CD8-positive, alpha-beta T cell (primary cell): ENCODE measurements at regions of chr20 and their contacts with region 1.

Region 1: GRCh38 chr20:45987108-45987780 is 15.2 kb upstream of the ZNF335 start:
- DNase-seq: peak; percentile 55 to 84 (median 81)
- ATAC-seq: peak; percentile 99
- H3K4me3 ChIP-seq: no peak overlapping the region
- H3K4me3 Mint-ChIP-seq: no peak overlapping the region
- H3K27ac ChIP-seq: no peak overlapping the region
- H3K27ac Mint-ChIP-seq: no peak overlapping the region
- H3K4me1 ChIP-seq: peaks cover 6% of the 10 kb centered on the region
- H3K4me1 Mint-ChIP-seq: no peaks in the 10 kb centered on the region
- H3K27me3 ChIP-seq: no peaks in the 10 kb centered on the region
- H3K27me3 Mint-ChIP-seq: peaks cover 15% of the 10 kb centered on the region
- CTCF ChIP-seq: peak; percentile 94

Region 2: DNA sequence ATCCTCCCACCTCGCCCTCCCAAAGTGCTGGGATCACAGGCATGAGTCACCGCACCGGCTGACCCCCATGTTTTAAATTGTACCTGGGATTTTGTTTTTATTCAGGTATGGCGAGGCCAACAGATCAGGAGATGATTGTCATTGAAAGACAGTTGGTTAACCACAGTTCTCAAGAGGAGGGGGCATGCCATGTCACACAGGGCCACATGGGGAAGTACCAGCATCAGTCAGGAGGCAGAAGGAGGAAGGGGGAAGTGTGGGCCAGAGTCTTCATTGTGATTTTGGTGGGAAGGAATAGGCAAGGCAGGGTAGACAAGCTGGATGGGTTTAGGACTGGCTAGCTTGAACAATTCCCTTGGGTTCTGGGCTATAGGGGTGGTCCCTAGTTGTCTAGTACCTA is 11.5 kb after region 1 on chr20:
- CTCF ChIA-PET with region 1: interaction called, 20 read pairs
- POLR2A ChIA-PET with region 1: interaction called, 4 read pairs
- intact Hi-C with region 1: no loop called
- DNase-seq: peak in 3 of 9 experiments; percentile 22 to 62 (median 34)
- ATAC-seq: peak; percentile 77
- H3K4me3 ChIP-seq: no peak overlapping the region
- H3K4me3 Mint-ChIP-seq: no peak overlapping the region
- H3K27ac ChIP-seq: no peak overlapping the region
- H3K27ac Mint-ChIP-seq: peak overlapping the region; percentile 24
- H3K4me1 ChIP-seq: peaks cover 55% of the 10 kb centered on the region
- H3K4me1 Mint-ChIP-seq: peaks cover 56% of the 10 kb centered on the region
- H3K27me3 ChIP-seq: no peaks in the 10 kb centered on the region
- H3K27me3 Mint-ChIP-seq: peaks cover 8% of the 10 kb centered on the region
- CTCF ChIP-seq: no peak

Region 3: GRCh38 chr20:46004889-46005473 is 17.7 kb after region 1 on chr20:
- CTCF ChIA-PET with region 1: interaction called, 123 read pairs
- POLR2A ChIA-PET with region 1: interaction called, 4 read pairs
- intact Hi-C with region 1: no loop called
- DNase-seq: peak in 5 of 9 experiments; percentile 10 to 80 (median 62)
- ATAC-seq: peak; percentile 68
- H3K4me3 ChIP-seq: peak overlapping the region; percentile 6 to 18
- H3K4me3 Mint-ChIP-seq: peak overlapping the region; percentile 77
- H3K27ac ChIP-seq: no peak overlapping the region
- H3K27ac Mint-ChIP-seq: peak overlapping the region; percentile 85
- H3K4me1 ChIP-seq: peaks cover 70% of the 10 kb centered on the region
- H3K4me1 Mint-ChIP-seq: peaks cover 79% of the 10 kb centered on the region
- H3K27me3 ChIP-seq: peaks cover 8% of the 10 kb centered on the region in 2 experiments
- H3K27me3 Mint-ChIP-seq: peaks cover 31% of the 10 kb centered on the region
- CTCF ChIP-seq: no peak

Region 4: GRCh38 chr20:46013826-46014516 is 26.7 kb after region 1 on chr20:
- CTCF ChIA-PET with region 1: interaction called, 123 read pairs
- POLR2A ChIA-PET with region 1: no interaction called
- intact Hi-C with region 1: loop called (anchors 1 kb)
- DNase-seq: peak; percentile 44 to 85 (median 73)
- ATAC-seq: peak; percentile 60
- H3K4me3 ChIP-seq: peak overlapping the region; percentile 22 to 34
- H3K4me3 Mint-ChIP-seq: peak overlapping the region; percentile 15
- H3K27ac ChIP-seq: no peak overlapping the region
- H3K27ac Mint-ChIP-seq: no peak overlapping the region
- H3K4me1 ChIP-seq: peaks cover 40% of the 10 kb centered on the region
- H3K4me1 Mint-ChIP-seq: peaks cover 46% of the 10 kb centered on the region
- H3K27me3 ChIP-seq: peaks cover 34 to 44% of the 10 kb centered on the region in 2 experiments
- H3K27me3 Mint-ChIP-seq: peaks cover 76% of the 10 kb centered on the region
- CTCF ChIP-seq: peak; percentile 94